ENCODE measurements at regions of chr2 and their contacts with region 1.

Region 1: GRCh38 chr2:226649871-226650660 is 149.6 kb downstream of the IRS1 start:
- DNase-seq: peak; percentile 89
- H3K4me3 Mint-ChIP-seq: peak overlapping the region; percentile 71
- H3K27ac Mint-ChIP-seq: peak overlapping the region; percentile 94
- H3K4me1 Mint-ChIP-seq: peaks cover 42% of the 10 kb centered on the region
- H3K27me3 Mint-ChIP-seq: no peaks in the 10 kb centered on the region

Region 2: GRCh38 chr2:226423498-226423960 is 226.5 kb before region 1 on chr2:
- intact Hi-C with region 1: loop called (anchors 5 kb)
- DNase-seq: peak; percentile 87
- H3K4me3 Mint-ChIP-seq: peak overlapping the region; percentile 54
- H3K27ac Mint-ChIP-seq: peak overlapping the region; percentile 23
- H3K4me1 Mint-ChIP-seq: peaks cover 16% of the 10 kb centered on the region
- H3K27me3 Mint-ChIP-seq: peaks cover 25% of the 10 kb centered on the region

Region 3: GRCh38 chr2:226701052-226701451 is 51.0 kb after region 1 on chr2:
- intact Hi-C with region 1: no loop called
- DNase-seq: no peak
- H3K4me3 Mint-ChIP-seq: no peak overlapping the region
- H3K27ac Mint-ChIP-seq: no peak overlapping the region
- H3K4me1 Mint-ChIP-seq: peaks cover 7% of the 10 kb centered on the region
- H3K27me3 Mint-ChIP-seq: peaks cover 13% of the 10 kb centered on the region

Region 4: DNA sequence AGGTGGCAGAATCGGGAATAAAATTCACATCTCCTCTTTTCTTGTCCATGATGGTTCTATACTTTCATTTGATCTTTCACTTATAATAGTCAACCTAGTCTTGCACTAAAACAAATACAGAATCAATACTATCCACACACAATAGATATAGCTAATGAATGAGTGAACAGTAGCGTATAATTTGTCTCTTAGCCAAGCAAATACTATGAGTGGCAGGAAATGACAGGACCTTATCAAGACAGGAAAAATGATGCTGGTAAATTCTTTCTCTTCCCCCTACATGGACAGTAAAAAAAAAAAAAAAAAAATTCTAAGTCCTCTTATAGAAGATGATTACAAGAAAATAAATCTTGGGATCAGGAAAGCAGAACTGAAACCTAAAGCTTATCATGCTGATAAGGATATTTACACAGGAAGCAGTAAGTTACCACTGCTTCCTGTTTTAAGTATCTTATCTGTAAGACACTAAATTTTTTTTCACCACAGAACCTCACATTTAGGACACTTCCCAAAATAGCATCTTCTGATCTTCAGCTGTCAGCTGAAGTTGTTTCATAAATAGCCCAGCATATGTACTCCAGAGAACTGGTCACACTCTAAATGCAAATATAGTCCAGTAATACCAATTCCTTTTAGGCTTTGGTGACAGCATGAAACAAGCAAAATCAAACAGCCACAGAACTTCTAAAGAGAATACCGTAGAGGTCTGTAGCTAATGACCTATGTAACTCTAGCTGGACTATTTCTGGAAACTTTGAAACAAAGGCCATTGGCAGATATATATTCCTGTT is 122.5 kb after region 1 on chr2:
- intact Hi-C with region 1: loop called (anchors 5 kb)
- DNase-seq: peak; percentile 68
- H3K4me3 Mint-ChIP-seq: peak overlapping the region; percentile 57
- H3K27ac Mint-ChIP-seq: no peak overlapping the region
- H3K4me1 Mint-ChIP-seq: peaks cover 26% of the 10 kb centered on the region
- H3K27me3 Mint-ChIP-seq: no peaks in the 10 kb centered on the region

Region 5: DNA sequence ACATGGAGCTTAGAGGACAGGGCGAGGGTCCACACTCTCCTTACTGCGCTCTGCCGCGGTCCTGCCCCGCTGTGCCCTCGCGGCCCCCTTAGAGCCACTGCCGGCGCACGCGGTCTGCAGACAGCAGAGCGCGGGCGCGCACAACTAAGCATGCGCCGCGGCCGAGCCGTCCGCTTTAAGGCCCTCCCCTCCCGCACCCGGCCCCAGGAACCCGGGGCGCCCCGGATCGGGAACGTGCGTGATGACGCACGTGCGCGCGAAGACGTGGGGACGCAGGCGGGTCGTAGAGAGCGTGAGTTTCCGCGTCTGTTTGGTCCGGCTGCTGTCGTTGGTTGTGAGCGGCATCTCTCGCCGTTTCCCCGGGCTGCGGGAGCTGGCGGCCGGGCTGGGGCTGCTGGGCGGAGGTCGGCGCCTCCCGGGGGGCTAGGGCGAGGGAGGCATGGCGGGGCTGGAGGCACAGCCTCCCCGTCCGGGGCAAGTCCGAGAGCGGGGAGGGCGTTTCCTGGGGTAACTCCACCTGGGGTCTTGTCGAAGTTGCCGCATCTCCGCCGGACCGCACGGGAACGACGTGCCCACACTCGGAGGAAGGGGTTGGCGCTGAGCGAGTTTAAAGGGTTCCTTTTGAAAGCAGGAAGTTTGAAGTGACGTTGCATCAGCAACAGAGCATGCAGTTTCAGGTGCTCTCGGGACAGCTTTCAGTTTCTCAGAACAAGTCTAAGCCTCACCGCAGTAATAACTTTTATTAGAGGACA is 185.9 kb after region 1 on chr2 and contains the start of gene RHBDD1:
- intact Hi-C with region 1: loop called (anchors 2 kb)
- DNase-seq: peak; percentile 98
- H3K4me3 Mint-ChIP-seq: peak within 1 kb of the TSS; percentile 95
- H3K27ac Mint-ChIP-seq: peak within 1 kb of the TSS; percentile 97
- H3K4me1 Mint-ChIP-seq: peaks cover 54% of the 10 kb centered on the region
- H3K27me3 Mint-ChIP-seq: no peaks in the 10 kb centered on the region
- total RNA-seq, gene RHBDD1: 41.3 and 44.7 TPM in 2 replicates